Gastrocnemius medialis (tissue), 4 donors: ENCODE measurements at regions of chr6 and their contacts with region 1.

Region 1: GRCh38 chr6:35139908-35140655 is 1.1 kb downstream of the TCP11 start:
- DNase-seq: peak in 1 of 2 donors; percentile 17
- ATAC-seq: peak in 1 of 2 donors; percentile 49
- H3K4me3 ChIP-seq: no peak overlapping the region
- H3K27ac ChIP-seq: no peak overlapping the region
- H3K4me1 ChIP-seq: peaks cover 0 to 4% of the 10 kb centered on the region in 2 donors
- H3K27me3 ChIP-seq: peaks cover 6 to 7% (median 6%) of the 10 kb centered on the region in 3 donors
- CTCF ChIP-seq: peak; percentile 76 to 89 (median 82)
- POLR2A ChIP-seq: no peak

Region 2: DNA sequence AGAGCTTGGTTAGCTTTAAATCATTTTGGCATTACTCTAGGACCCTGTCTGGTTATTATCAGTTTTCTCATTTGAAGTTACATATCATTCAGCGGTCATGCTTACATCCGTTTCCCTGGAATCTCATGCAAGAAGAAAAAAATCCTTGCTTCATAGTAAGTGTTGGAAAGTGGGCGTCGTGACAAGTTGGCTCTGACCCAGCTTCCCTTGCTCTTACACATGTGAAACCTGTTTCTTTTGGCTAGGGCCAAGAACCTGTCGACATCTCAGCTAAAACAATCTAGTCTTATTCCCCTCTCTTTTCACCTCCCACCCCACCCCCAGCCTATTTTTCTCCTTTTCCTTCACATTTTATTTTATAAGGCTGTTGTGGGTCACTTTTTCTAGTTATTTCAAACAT is 205.6 kb before region 1 on chr6:
- in situ Hi-C with region 1: no loop called
- intact Hi-C with region 1: no loop called
- DNase-seq: peak; percentile 19 to 56
- ATAC-seq: peak in 1 of 2 donors; percentile 62
- H3K4me3 ChIP-seq: no peak overlapping the region
- H3K27ac ChIP-seq: peak overlapping the region in 2 of 4 donors; percentile 1 to 24
- H3K4me1 ChIP-seq: peaks cover 25 to 29% of the 10 kb centered on the region in 2 donors
- H3K27me3 ChIP-seq: no peaks in the 10 kb centered on the region
- CTCF ChIP-seq: no peak
- POLR2A ChIP-seq: no peak

Region 3: GRCh38 chr6:35057449-35058357 is 82.4 kb before region 1 on chr6:
- in situ Hi-C with region 1: no loop called
- intact Hi-C with region 1: no loop called
- DNase-seq: no peak
- ATAC-seq: no peak
- H3K4me3 ChIP-seq: no peak overlapping the region
- H3K27ac ChIP-seq: peak overlapping the region in 3 of 4 donors; percentile 38 to 56 (median 42)
- H3K4me1 ChIP-seq: peaks cover 3 to 8% of the 10 kb centered on the region in 2 donors
- H3K27me3 ChIP-seq: no peaks in the 10 kb centered on the region
- CTCF ChIP-seq: no peak
- POLR2A ChIP-seq: no peak

Region 4: GRCh38 chr6:35202066-35202546 is 62.0 kb after region 1 on chr6:
- in situ Hi-C with region 1: loop called in 1 of 4 experiments (anchors 10 kb)
- intact Hi-C with region 1: no loop called
- DNase-seq: no peak
- ATAC-seq: no peak
- H3K4me3 ChIP-seq: no peak overlapping the region
- H3K27ac ChIP-seq: no peak overlapping the region
- H3K4me1 ChIP-seq: no peaks in the 10 kb centered on the region
- H3K27me3 ChIP-seq: peaks cover 0 to 13% (median 12%) of the 10 kb centered on the region in 3 donors
- CTCF ChIP-seq: no peak
- POLR2A ChIP-seq: no peak